Heart right ventricle (tissue), 16 donors: ENCODE measurements at regions of chr20 and their contacts with region 1.

Region 1: GRCh38 chr20:35893942-35894341 is 60.4 kb downstream of the SCAND1 start:
- DNase-seq: no peak
- ATAC-seq: no peak
- H3K4me3 ChIP-seq: no peak overlapping the region
- H3K27ac ChIP-seq: no peak overlapping the region
- H3K4me1 ChIP-seq: peaks cover 0 to 7% (median 0%) of the 10 kb centered on the region in 9 donors
- H3K27me3 ChIP-seq: no peaks in the 10 kb centered on the region
- CTCF ChIP-seq: no peak

Region 2: DNA sequence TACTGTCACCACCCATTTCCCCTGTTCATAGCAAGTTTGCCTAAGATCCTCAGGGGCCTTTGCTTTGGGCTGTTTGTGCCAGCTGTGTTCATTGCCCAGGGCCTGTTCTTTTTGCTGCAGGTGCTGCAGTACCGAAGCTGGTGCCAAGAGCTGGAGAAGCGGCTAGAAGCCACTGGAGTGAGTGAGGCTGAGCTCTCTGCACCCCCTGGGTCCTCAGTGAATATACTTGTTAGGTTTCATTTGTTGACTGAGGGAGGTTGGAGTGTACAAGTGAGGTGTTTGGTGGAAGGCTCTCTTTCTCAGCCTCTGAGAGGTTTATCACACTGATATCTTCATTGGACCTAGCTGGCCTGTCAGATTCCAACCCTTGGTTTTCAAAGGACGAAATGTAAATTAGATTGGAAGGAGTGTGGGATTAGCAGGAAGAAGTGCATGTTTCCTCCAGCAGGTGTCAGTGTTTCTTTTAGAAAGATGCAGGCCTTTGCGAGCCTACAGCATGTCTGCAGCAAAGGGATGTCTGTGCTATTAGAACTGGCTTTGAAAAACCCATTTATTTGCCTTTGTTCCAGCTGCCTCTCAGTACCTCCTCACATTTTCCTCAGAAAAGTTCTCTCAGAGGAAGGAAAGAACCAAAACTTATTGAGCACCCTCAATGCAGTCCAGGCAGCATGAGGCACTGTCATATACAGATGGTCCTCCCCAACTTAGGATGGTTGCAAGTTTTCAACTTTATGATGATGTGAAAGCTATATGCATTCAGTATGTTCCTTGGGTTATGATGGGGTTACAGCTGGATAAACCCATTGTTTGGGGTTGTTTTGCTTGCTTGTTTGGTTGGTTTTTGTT is 430.3 kb before region 1 on chr20:
- intact Hi-C with region 1: loop called in 2 of 10 experiments (anchors 10 kb)
- DNase-seq: peak in 1 of 2 donors; percentile 63
- ATAC-seq: peak; percentile 64 to 81 (median 72)
- H3K4me3 ChIP-seq: no peak overlapping the region
- H3K27ac ChIP-seq: no peak overlapping the region
- H3K4me1 ChIP-seq: no peaks in the 10 kb centered on the region
- H3K27me3 ChIP-seq: no peaks in the 10 kb centered on the region
- CTCF ChIP-seq: peak; percentile 57 to 85 (median 81)

Region 3: DNA sequence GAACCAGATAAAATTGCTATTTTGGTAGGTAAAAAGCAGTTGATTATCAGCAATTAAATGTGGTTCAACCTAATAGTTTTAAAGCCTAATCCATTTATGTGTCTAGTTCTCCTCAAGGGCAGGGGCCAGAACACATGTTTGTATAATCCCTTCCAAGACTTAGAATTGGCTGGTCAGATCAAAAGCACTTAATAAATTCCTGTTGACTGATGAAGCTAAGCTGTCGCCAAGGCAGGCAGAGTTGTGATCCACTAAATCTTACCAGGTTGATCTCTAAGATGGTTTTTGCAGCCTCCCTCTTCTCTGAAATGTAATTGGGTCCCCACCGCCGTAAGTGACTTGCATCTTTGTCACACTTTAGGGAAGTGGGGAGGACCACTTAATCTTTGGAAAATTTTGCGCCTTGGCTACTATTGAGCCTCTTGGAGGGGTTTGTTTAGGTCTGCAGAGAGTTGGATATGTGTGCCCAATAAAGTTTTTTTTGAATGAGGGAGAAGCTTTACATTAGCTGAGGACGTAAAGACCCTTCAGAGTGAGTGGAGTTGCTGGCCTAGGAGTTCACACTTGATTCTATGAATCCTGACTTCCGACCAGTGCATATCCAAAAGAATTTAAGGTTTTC is 56.3 kb before region 1 on chr20:
- intact Hi-C with region 1: no loop called
- DNase-seq: no peak
- ATAC-seq: peak in 1 of 8 donors; percentile 34
- H3K4me3 ChIP-seq: no peak overlapping the region
- H3K27ac ChIP-seq: no peak overlapping the region
- H3K4me1 ChIP-seq: peaks cover 0 to 9% (median 6%) of the 10 kb centered on the region in 9 donors
- H3K27me3 ChIP-seq: no peaks in the 10 kb centered on the region
- CTCF ChIP-seq: no peak

Region 4: DNA sequence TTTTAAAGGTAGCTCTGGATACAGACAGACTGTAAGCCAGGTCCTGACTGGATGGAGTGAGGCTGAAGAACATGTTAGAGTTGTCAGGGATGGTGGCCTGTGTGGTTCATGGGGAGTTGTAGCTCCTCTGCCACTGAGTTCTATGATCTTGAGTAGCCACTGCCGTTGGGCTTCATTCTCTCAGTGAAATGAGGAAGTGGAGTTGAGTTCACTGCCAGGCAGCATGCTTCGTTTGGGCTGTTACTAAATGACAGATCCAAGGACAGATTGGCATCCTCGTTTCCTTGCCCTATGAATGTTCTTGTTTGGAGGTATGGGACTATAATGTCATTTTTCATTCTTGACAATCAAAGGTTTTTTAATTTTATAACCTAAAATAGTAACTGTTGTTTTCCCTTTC is 23.1 kb after region 1 on chr20:
- intact Hi-C with region 1: no loop called
- DNase-seq: no peak
- ATAC-seq: no peak
- H3K4me3 ChIP-seq: no peak overlapping the region
- H3K27ac ChIP-seq: no peak overlapping the region
- H3K4me1 ChIP-seq: no peaks in the 10 kb centered on the region
- H3K27me3 ChIP-seq: no peaks in the 10 kb centered on the region
- CTCF ChIP-seq: no peak